Prostate gland (tissue), 2 donors: ENCODE measurements at regions of chr4 and their contacts with region 1.

Region 1: DNA sequence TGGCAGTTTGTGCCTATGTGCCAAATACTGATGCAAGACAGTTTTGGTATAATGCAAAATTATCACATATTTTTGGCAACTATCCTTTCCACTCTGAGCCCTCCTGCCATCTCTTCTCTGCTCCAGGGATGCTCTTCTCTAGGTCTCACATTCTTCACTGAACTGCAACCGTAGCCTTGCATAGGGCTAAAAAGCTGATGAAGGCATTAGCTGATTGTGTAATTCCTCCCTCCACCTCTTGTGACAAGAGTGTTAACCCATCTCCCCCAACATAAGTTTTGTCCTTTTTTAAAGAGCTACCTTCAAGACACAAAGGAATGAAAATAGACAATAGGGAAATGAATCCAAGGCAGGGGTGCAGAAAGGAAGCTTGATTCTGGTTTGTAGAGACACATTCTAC is 33.1 kb upstream of the ANK2 start:
- DNase-seq: no peak
- H3K4me3 ChIP-seq: no peak overlapping the region
- H3K27ac ChIP-seq: no peak overlapping the region
- H3K4me1 ChIP-seq: no peaks in the 10 kb centered on the region
- H3K27me3 ChIP-seq: no peaks in the 10 kb centered on the region
- CTCF ChIP-seq: no peak
- POLR2A ChIP-seq: no peak

Region 2: GRCh38 chr4:112633477-112634235 is 382.7 kb before region 1 on chr4:
- intact Hi-C with region 1: no loop called
- DNase-seq: no peak
- H3K4me3 ChIP-seq: no peak overlapping the region
- H3K27ac ChIP-seq: no peak overlapping the region
- H3K4me1 ChIP-seq: peaks cover 7% of the 10 kb centered on the region
- H3K27me3 ChIP-seq: no peaks in the 10 kb centered on the region
- CTCF ChIP-seq: peak in 3 of 4 experiments; percentile 39 to 43 (median 40)
- POLR2A ChIP-seq: no peak

Region 3: DNA sequence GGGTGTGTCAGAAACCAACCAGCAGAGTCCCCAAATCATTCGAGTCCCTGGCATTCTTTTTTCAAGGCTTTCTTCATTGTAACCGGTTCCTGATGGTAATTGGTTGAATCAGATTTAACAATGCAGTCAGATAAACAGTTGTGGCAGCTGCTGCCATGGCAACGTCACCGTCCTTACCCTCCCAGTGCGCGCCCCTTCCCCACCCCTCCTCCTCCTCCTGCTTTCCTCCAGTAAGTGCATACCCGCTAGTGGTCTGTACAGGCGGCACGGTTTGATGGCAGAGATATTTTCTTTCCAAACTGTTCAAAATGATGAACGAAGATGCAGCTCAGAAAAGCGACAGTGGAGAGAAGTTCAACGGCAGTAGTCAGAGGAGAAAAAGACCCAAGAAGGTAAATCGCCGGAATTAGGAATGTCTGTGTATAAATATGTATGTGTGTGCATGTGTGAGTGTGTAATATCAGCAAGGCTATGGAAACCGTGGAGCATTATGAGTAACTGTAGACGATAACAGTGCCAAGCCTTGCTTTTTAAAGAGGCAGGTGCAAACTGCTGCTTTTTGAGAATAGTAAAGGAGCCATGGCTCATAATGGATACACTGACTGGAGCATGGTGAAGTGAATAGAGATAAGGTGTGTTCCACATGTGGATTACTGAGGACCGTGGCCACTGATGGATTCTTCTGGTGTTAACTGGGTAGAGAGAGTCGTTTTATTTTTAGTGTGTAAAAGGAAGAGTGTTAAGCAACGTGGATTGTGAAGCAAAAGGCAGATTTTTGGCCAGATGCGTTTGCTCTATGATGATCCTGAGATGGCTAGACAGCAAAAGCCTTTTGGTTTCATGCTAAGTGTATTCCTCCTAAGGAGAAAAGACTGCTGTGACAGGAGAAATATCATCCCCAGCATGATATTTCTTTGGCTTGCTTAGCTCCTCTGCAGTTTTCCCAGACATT is 33.3 kb after region 1 on chr4 and contains the start of gene ANK2:
- intact Hi-C with region 1: loop called (anchors 2 kb)
- DNase-seq: no peak
- H3K4me3 ChIP-seq: no peak within 1 kb of the TSS
- H3K27ac ChIP-seq: no peak within 1 kb of the TSS
- H3K4me1 ChIP-seq: no peaks in the 10 kb centered on the region
- H3K27me3 ChIP-seq: no peaks in the 10 kb centered on the region
- CTCF ChIP-seq: no peak
- POLR2A ChIP-seq: no peak
- total RNA-seq, gene ANK2: 3.5 to 26.0 TPM